ENCODE measurements at regions of chr2 and their contacts with region 1.

Region 1: GRCh38 chr2:99154643-99155536 is at the starts of genes LIPT1 and TSGA10:
- DNase-seq: peak; percentile 88 to 94
- ATAC-seq: peak; percentile 98 to 99
- H3K4me3 ChIP-seq: peak within 1 kb of the TSS; percentile 59
- H3K27ac ChIP-seq: peak within 1 kb of the TSS; percentile 83 to 92
- H3K4me1 ChIP-seq: peaks cover 10% of the 10 kb centered on the region; the same call in 1 of the 3 replicates
- CTCF ChIP-seq: 0 out of 3 replicates have a peak, but pooled peaks have one; percentile 20
- EP300 ChIP-seq: no peak
- POLR2A ChIP-seq: peak; percentile 85
- RAD21 ChIP-seq: no peak
- polyA plus RNA-seq, gene LIPT1: 10.0 and 10.9 TPM in 2 replicates
- polyA plus RNA-seq, gene TSGA10: 3.7 and 4.3 TPM in 2 replicates

Region 2: GRCh38 chr2:99141110-99142108 is 13.5 kb before region 1 on chr2 and contains the start of gene C2orf15:
- CTCF ChIA-PET with region 1: interaction called, 14 read pairs
- POLR2A ChIA-PET with region 1: interaction called, 54 read pairs
- DNase-seq: peak; percentile 44 to 91
- ATAC-seq: peak; percentile 92 to 95
- H3K4me3 ChIP-seq: peak within 1 kb of the TSS; percentile 63
- H3K27ac ChIP-seq: peak within 1 kb of the TSS; percentile 67 to 89
- H3K4me1 ChIP-seq: peaks cover 10% of the 10 kb centered on the region; the same call in 2 of the 3 replicates
- CTCF ChIP-seq: no peak
- EP300 ChIP-seq: no peak
- POLR2A ChIP-seq: no peak; the same call in 1 of the 2 replicates
- RAD21 ChIP-seq: no peak
- polyA plus RNA-seq, gene C2orf15: 1.2 and 1.6 TPM in 2 replicates

Region 3: GRCh38 chr2:99166218-99166617 is 11.3 kb after region 1 on chr2:
- CTCF ChIA-PET with region 1: interaction called, 4 read pairs
- POLR2A ChIA-PET with region 1: interaction called, 11 read pairs
- DNase-seq: no peak
- ATAC-seq: no peak
- H3K4me3 ChIP-seq: no peak overlapping the region
- H3K27ac ChIP-seq: no peak overlapping the region
- H3K4me1 ChIP-seq: no peaks in the 10 kb centered on the region
- CTCF ChIP-seq: no peak
- EP300 ChIP-seq: no peak
- POLR2A ChIP-seq: no peak
- RAD21 ChIP-seq: no peak

Region 4: GRCh38 chr2:99180755-99181623 is 26.1 kb after region 1 on chr2 and contains the starts of genes MITD1 and MRPL30:
- CTCF ChIA-PET with region 1: interaction called, 3 read pairs
- POLR2A ChIA-PET with region 1: interaction called, 10 read pairs
- DNase-seq: peak; percentile 72 to 96
- ATAC-seq: peak; percentile 93 to 97
- H3K4me3 ChIP-seq: peak within 1 kb of the TSS; percentile 94
- H3K27ac ChIP-seq: peak within 1 kb of the TSS; percentile 80 to 91
- H3K4me1 ChIP-seq: peaks cover 26% of the 10 kb centered on the region
- CTCF ChIP-seq: no peak
- EP300 ChIP-seq: no peak
- POLR2A ChIP-seq: peak; percentile 86
- RAD21 ChIP-seq: no peak
- polyA plus RNA-seq, gene MITD1: 17.8 and 33.7 TPM in 2 replicates
- polyA plus RNA-seq, gene MRPL30: 36.1 and 43.5 TPM in 2 replicates

Region 5: GRCh38 chr2:99201959-99202678 is 47.2 kb after region 1 on chr2:
- CTCF ChIA-PET with region 1: no interaction called
- POLR2A ChIA-PET with region 1: no interaction called
- DNase-seq: no peak
- ATAC-seq: peak in 1 of 2 experiments; percentile 57; a peak in 3 of 6 replicates
- H3K4me3 ChIP-seq: no peak overlapping the region
- H3K27ac ChIP-seq: no peak overlapping the region
- H3K4me1 ChIP-seq: peaks cover 9% of the 10 kb centered on the region; the same call in 2 of the 3 replicates
- CTCF ChIP-seq: no peak
- EP300 ChIP-seq: no peak
- POLR2A ChIP-seq: no peak
- RAD21 ChIP-seq: no peak